ENCODE measurements at regions of chr7 and their contacts with region 1.

Region 1: GRCh38 chr7:106022193-106022821 is 59.2 kb downstream of the CDHR3 start:
- DNase-seq: peak; percentile 85
- H3K4me3 Mint-ChIP-seq: peak overlapping the region; percentile 14
- H3K27ac Mint-ChIP-seq: peak overlapping the region; percentile 76
- H3K4me1 Mint-ChIP-seq: peaks cover 40% of the 10 kb centered on the region
- H3K27me3 Mint-ChIP-seq: no peaks in the 10 kb centered on the region

Region 2: GRCh38 chr7:105678811-105679495 is 343.4 kb before region 1 on chr7:
- CTCF ChIA-PET with region 1: interaction called, 3 read pairs
- POLR2A ChIA-PET with region 1: no interaction called
- intact Hi-C with region 1: loop called (anchors 1 kb)
- DNase-seq: peak; percentile 54
- H3K4me3 Mint-ChIP-seq: peak overlapping the region; percentile 78
- H3K27ac Mint-ChIP-seq: peak overlapping the region; percentile 95
- H3K4me1 Mint-ChIP-seq: peaks cover 75% of the 10 kb centered on the region
- H3K27me3 Mint-ChIP-seq: no peaks in the 10 kb centered on the region

Region 3: GRCh38 chr7:105691733-105692564 is 330.4 kb before region 1 on chr7:
- CTCF ChIA-PET with region 1: no interaction called
- POLR2A ChIA-PET with region 1: no interaction called
- intact Hi-C with region 1: loop called (anchors 2 kb)
- DNase-seq: peak; percentile 78
- H3K4me3 Mint-ChIP-seq: peak overlapping the region; percentile 78
- H3K27ac Mint-ChIP-seq: peak overlapping the region; percentile 76
- H3K4me1 Mint-ChIP-seq: peaks cover 47% of the 10 kb centered on the region
- H3K27me3 Mint-ChIP-seq: no peaks in the 10 kb centered on the region

Region 4: DNA sequence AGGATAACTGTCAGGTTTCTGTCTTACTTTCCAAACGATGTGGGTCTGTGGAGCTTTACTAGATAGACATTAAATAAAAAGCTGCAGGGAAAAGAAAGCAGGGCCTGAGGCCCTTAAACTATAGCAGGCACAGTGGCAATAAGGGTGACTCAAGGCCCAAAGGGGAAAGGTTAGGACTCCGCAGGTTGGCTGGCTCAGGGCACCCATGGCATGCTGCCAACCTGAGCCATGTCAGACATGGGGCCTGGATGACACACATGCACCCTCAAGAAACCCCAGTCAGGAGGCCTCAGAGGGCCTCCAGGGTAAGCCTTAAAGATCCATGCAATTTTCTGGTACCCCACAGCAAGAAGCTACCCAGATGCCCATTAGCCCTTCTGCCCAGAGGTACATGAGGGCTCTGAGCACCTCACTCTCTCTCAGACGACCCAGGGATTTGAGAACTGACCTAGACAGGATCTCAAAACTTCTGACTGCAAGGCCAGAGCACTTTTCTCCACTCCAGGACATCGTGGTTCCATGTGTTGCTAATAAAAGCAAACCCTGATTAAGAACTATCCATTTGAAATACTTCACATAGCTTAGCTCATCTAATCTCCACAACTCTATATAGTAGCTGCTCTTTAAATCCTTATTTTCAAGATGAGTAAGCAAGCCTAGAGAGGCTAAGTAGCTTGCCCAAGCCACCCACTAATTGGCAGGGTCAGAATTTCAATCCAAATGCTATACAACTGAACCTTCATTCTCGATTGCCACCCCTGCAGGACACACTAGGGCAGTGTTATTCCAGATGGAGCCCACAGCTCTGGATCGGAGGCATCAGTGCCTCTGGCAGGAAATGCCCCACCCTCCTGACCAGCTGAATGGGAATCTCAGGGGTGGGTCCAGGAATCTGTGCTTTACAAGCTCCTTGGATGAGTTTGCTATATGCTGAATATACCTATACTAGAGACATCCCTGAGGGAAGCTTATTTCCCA is 308.5 kb before region 1 on chr7:
- CTCF ChIA-PET with region 1: no interaction called
- POLR2A ChIA-PET with region 1: no interaction called
- intact Hi-C with region 1: no loop called
- DNase-seq: no peak
- H3K4me3 Mint-ChIP-seq: no peak overlapping the region
- H3K27ac Mint-ChIP-seq: no peak overlapping the region
- H3K4me1 Mint-ChIP-seq: peaks cover 6% of the 10 kb centered on the region
- H3K27me3 Mint-ChIP-seq: no peaks in the 10 kb centered on the region

Region 5: DNA sequence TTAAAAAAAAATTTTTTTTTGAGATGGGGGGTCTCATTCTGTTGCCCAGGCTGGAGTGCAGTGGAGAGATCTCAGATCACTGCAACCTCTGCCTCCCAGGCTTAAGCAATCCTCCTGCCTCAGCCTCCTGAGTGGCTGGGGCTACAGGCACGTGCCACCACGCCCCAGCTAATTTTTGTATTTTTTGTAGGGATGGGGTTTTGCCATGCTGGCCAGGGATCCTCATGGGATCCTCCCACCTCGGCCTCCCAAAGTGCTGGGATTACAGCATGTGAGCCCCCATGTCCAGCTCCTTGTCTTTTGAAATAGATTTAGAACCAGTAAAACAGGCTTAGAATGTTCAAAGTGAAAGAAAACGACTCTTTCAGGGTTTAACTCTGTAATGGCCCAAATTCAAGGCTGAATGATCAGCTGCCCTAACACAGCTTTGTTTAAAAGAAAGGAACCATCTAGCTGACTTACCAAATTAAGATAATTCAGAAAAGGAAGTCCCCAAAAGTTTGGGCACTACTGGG is 204.1 kb before region 1 on chr7:
- CTCF ChIA-PET with region 1: no interaction called
- POLR2A ChIA-PET with region 1: no interaction called
- intact Hi-C with region 1: no loop called
- DNase-seq: no peak
- H3K4me3 Mint-ChIP-seq: no peak overlapping the region
- H3K27ac Mint-ChIP-seq: no peak overlapping the region
- H3K4me1 Mint-ChIP-seq: peaks cover 21% of the 10 kb centered on the region
- H3K27me3 Mint-ChIP-seq: no peaks in the 10 kb centered on the region

Region 6: DNA sequence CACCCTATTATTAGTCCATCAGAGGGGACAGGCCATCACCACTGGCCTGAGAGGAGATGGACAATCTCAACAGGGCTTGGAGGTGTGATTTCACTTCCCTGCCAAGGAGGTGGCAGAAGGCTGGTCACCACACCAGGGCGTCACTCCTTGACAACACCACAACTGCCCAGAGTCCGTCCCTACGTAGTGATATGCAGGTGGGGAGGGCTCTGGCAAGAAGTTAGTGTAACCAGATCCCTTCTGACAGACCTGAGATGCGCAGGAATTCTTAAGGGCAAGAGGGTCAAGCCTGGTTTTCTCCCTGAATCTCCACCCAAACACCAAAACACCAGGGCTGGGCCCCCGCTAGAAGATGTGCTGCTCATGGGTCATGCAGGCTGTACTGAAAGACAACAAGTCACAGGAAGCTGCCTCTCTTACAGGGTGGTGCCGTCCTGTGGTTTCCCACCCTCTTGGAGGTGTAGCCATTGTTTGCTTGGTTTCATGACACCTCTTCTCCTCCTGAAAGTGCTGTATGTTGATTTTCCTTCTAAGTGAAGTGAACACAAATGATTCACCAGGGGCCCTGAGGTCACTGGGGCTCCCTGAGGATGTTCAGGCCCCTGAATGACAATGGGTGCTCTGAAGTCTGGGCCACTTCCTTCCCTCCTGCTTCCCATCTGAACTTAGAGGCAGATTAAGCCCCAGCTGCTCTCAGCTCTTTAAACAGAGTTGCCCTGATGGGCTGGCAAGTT is 173.0 kb before region 1 on chr7:
- CTCF ChIA-PET with region 1: interaction called, 4 read pairs
- POLR2A ChIA-PET with region 1: no interaction called
- intact Hi-C with region 1: loop called (anchors 1 kb)
- DNase-seq: peak; percentile 87
- H3K4me3 Mint-ChIP-seq: peak overlapping the region; percentile 11
- H3K27ac Mint-ChIP-seq: peak overlapping the region; percentile 68
- H3K4me1 Mint-ChIP-seq: peaks cover 46% of the 10 kb centered on the region
- H3K27me3 Mint-ChIP-seq: no peaks in the 10 kb centered on the region

Region 7: DNA sequence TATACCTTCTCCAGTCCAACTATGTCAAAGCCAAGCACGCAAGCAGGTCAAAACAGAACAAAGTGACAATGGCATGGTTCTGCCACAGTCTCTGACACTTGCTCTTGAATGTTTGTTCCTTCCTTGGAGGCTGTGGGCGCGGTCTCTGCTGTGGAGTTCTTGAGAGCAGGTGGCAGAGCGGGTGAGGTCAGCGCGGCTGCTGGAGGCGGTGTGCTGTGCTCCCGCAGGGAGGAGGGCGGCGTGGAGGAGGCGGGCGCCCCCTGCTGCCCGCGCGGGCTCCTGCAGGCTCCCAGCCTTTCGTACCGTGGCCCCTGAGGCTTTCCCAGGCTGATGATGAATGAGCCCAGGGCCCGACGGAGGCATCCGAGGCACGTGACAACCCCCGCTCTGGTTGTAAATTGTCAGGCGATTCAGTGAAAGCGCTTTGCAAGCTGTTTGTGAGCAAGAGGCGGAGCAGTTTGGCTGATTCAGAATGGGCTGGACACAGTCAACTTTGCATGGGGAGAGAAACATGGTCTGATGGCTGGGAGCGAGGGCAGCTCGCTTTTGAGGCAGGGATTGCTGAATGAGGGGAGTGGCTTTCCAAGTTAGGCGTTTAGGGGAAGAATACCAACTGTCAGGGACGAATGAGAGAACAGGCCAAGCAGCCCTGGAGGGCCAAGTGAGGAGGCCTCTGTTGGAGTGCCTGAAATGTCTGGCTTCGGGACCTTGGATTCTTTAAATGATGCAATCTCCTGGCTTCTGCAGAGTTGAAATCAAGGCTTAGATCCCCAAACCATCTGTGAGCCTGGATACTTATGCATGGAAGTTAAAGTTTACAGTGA is 12.7 kb before region 1 on chr7:
- CTCF ChIA-PET with region 1: interaction called, 6 read pairs
- POLR2A ChIA-PET with region 1: no interaction called
- intact Hi-C with region 1: loop called (anchors 1 kb)
- DNase-seq: peak; percentile 91
- H3K4me3 Mint-ChIP-seq: no peak overlapping the region
- H3K27ac Mint-ChIP-seq: no peak overlapping the region
- H3K4me1 Mint-ChIP-seq: peaks cover 24% of the 10 kb centered on the region
- H3K27me3 Mint-ChIP-seq: peaks cover 2% of the 10 kb centered on the region

Region 8: DNA sequence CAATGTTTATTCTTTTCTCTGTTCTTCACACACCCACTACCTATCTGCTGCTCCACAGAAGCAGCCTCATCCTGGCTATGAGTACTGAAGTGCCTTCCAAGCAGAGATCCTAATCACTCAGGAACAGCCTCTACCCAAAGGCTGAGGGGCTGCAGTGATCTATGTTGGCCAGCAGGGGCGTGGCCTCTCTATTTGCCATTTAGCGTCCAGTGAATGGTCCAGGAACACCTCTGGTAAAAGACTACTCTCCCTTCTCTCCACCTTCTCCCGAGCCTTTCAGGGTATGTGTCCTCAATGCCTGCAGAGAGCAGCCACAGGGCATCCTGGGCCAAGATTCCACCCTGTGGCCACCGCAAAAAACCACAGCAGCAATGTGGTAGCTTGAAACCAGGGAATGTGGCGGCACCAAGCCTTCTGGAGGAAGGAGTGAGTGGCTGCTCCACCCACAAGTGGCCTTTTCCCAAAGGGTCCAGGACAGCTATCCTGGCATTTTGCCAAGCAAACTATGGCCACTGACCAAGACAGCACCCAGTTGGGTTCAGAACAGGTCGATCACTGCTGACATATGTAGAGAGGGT is 18.9 kb after region 1 on chr7:
- CTCF ChIA-PET with region 1: interaction called, 45 read pairs
- POLR2A ChIA-PET with region 1: interaction called, 3 read pairs
- intact Hi-C with region 1: loop called (anchors 1 kb)
- DNase-seq: peak; percentile 52
- H3K4me3 Mint-ChIP-seq: no peak overlapping the region
- H3K27ac Mint-ChIP-seq: no peak overlapping the region
- H3K4me1 Mint-ChIP-seq: peaks cover 23% of the 10 kb centered on the region
- H3K27me3 Mint-ChIP-seq: peaks cover 2% of the 10 kb centered on the region

Region 9: DNA sequence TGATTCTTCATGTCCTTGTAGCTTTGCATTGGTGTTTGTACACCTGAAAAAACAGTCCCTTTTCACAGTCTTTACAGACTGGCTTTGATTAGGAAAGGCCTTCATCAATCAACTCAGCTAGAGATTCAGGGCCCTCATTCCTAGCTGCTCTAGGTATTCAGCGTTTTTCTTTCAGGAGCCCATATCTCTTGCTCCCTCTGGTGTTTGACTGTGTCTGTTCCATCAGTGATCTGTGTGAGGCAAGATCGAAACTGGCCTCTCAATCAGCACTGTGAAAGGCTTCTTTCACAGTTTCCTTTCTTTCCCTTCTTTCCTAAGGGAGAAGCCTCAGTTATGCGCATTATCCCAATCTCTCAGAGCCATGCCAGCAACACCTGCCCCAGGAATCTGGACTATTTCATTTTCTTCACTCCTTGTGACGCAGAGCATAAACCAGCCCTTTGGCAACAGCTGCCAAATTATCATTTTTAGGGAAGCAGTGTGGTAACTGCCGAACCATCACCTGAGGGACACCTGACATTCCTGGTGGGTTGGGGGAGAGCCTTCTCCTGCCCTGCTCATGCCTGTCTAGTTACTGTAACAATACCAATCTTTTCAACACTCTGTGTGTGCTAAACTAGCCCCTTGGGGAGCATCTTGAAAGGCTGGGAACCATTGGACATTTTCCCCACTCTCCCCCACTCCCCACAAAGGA is 714.3 kb after region 1 on chr7:
- CTCF ChIA-PET with region 1: no interaction called
- POLR2A ChIA-PET with region 1: no interaction called
- intact Hi-C with region 1: no loop called
- DNase-seq: peak; percentile 55
- H3K4me3 Mint-ChIP-seq: no peak overlapping the region
- H3K27ac Mint-ChIP-seq: peak overlapping the region; percentile 73
- H3K4me1 Mint-ChIP-seq: peaks cover 47% of the 10 kb centered on the region
- H3K27me3 Mint-ChIP-seq: no peaks in the 10 kb centered on the region

Measured in activated CD4-positive, alpha-beta memory T cell treated with anti-CD3 and anti-CD28 coated beads for 36 hours (primary cell).